CD4-positive, alpha-beta memory T cell (primary cell): ENCODE measurements at regions of chr3 and their contacts with region 1.

Region 1: GRCh38 chr3:72996473-72997333 is at the start of gene PPP4R2:
- DNase-seq: peak; percentile 94 to 95 (median 95)
- H3K4me3 ChIP-seq: peak within 1 kb of the TSS; percentile 65 to 77
- H3K4me3 Mint-ChIP-seq: peak within 1 kb of the TSS; percentile 84 to 98 (median 94)
- H3K27ac ChIP-seq: peak within 1 kb of the TSS; percentile 92
- H3K27ac Mint-ChIP-seq: peak within 1 kb of the TSS; percentile 91 to 98 (median 93)
- H3K4me1 ChIP-seq: peaks cover 48% of the 10 kb centered on the region
- H3K4me1 Mint-ChIP-seq: peaks cover 29 to 47% (median 38%) of the 10 kb centered on the region in 4 donors
- H3K27me3 ChIP-seq: no peaks in the 10 kb centered on the region
- H3K27me3 Mint-ChIP-seq: no peaks in the 10 kb centered on the region
- total RNA-seq, gene PPP4R2: 71.8 to 77.0 TPM

Region 2: DNA sequence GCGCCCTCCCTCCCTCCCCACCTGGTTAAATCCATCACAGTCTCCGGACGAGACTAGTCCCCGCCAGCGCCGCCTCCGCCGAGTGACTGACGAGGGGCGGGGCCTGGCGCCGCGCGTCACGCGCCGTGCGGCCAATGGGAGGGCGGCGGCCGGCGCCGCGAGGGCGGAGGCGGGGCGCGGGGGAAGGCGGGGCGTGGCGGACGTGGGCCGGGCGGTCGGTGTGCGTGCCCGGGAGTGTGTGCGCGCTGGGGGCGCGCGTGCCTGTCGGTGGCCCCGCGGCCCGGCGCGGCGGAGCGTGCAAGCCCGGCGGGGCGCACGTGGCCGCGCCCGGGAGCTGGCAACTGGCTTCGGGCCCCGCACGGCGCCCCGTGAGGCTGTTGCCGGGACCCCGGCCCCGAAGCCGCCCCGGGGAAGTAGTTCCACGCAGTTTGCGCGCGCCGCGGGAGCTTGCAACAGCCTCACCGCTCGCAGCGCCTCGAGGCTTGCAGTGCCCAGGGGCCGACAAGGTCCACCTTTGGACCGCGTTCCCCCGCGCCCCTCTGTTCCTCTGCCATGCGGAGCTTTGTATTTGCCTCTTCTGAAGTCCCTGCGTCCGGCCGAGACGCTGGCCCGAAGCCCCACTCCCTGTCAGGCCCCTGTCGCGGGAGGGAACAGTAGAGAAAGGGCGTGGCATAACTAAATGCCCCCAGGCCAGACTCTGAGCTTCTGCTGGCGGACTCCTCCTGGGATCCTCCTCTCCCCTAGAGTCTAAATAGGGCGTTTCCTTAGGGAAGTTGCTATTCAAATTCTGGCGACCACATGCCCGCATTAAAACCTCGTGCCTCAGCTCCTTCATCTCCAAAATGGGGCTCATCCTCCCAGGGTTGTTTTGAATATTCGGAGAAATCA is 549.4 kb before region 1 on chr3:
- CTCF ChIA-PET with region 1: no interaction called
- POLR2A ChIA-PET with region 1: interaction called, 3 read pairs
- intact Hi-C with region 1: loop called (anchors 5 kb)
- DNase-seq: peak; percentile 88 to 97 (median 95)
- H3K4me3 ChIP-seq: peak overlapping the region in 1 of 2 donors; percentile 79
- H3K4me3 Mint-ChIP-seq: peak overlapping the region; percentile 66 to 85 (median 73)
- H3K27ac ChIP-seq: peak overlapping the region; percentile 64
- H3K27ac Mint-ChIP-seq: peak overlapping the region in 4 of 7 donors; percentile 26 to 83 (median 68)
- H3K4me1 ChIP-seq: peaks cover 49% of the 10 kb centered on the region
- H3K4me1 Mint-ChIP-seq: peaks cover 34 to 43% (median 39%) of the 10 kb centered on the region in 4 donors
- H3K27me3 ChIP-seq: no peaks in the 10 kb centered on the region
- H3K27me3 Mint-ChIP-seq: peaks cover 9 to 10% of the 10 kb centered on the region in 2 donors

Region 3: DNA sequence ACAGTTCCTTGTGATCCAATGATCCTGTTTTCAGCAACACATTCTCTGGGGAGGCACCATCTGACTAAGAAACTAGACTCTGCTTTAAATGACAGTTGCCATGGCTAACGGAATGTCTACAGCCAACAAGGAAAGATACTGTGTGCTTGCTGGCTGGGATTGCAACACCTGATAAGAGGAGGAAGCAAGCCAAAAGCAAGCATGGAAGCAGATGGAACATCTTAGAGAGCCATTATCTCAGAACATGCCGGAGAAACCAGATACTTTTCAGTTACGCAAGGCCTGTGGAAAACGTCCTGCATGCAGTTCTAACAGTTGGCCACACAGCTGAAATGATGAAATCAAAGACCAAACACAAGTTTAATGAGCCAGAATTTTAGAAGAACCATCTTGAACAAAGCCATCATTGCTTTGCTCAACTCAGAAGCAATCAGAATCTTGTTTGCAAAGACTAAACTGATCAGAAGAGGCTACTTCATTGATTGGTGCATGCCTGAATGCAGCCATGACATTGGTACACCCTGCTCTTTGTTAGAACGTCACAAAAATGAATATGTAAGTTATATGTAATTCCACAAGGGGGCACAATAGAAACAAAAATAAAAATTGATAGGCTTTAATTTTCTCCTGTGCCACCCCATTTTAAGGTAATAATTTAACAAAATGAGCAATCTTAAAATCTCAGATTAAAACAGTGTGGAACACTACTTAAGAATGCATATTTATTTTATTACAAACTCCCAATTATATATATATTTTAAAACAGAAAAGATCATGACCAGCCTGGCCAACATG is 58.0 kb before region 1 on chr3:
- CTCF ChIA-PET with region 1: interaction called, 4 read pairs
- POLR2A ChIA-PET with region 1: no interaction called
- intact Hi-C with region 1: loop called (anchors 1 kb)
- DNase-seq: peak; percentile 60 to 71 (median 63)
- H3K4me3 ChIP-seq: no peak overlapping the region
- H3K4me3 Mint-ChIP-seq: no peak overlapping the region
- H3K27ac ChIP-seq: no peak overlapping the region
- H3K27ac Mint-ChIP-seq: peak overlapping the region in 1 of 7 donors; percentile 35
- H3K4me1 ChIP-seq: no peaks in the 10 kb centered on the region
- H3K4me1 Mint-ChIP-seq: peaks cover 0 to 2% (median 0%) of the 10 kb centered on the region in 4 donors
- H3K27me3 ChIP-seq: no peaks in the 10 kb centered on the region
- H3K27me3 Mint-ChIP-seq: peaks cover 0 to 8% of the 10 kb centered on the region in 2 donors

Region 4: DNA sequence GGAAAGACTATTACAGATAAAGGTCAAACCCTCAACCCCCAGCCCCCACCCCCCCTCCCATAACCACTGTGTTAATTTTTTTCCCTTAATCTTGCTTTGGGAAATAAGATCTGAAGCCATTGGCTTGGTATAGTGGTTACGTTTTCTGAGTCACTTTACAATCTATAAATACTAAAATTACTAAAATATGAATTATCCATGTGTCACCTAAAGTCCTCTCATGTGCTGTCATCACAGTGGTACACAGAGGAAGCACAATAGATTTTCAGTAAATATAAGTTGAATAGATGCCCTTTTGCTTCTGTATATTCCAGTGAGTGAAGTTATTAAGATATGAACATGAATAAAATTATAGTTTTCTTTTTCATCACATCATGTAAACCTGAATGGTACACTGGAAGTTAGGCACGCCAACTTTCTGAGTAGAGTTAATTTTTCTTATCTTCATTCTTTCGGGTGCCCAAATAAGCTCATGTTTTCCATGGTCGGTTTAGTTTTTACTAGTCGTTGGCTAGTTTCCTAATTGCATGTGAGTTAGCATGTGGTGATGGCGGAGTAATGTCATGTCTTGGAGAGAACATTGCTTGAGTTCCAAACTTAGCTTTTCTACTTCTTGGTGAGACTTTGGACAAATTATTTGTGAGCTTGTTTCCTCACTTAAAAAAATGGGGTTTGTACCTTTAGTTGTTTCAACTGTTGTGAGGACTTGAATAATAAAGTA is 11.4 kb after region 1 on chr3:
- CTCF ChIA-PET with region 1: interaction called, 15 read pairs
- POLR2A ChIA-PET with region 1: interaction called, 10 read pairs
- intact Hi-C with region 1: no loop called
- DNase-seq: no peak
- H3K4me3 ChIP-seq: no peak overlapping the region
- H3K4me3 Mint-ChIP-seq: peak overlapping the region in 6 of 8 donors; percentile 25 to 66 (median 42)
- H3K27ac ChIP-seq: no peak overlapping the region
- H3K27ac Mint-ChIP-seq: peak overlapping the region in 5 of 7 donors; percentile 3 to 80 (median 6)
- H3K4me1 ChIP-seq: peaks cover 88% of the 10 kb centered on the region
- H3K4me1 Mint-ChIP-seq: peaks cover 55 to 94% (median 71%) of the 10 kb centered on the region in 4 donors
- H3K27me3 ChIP-seq: no peaks in the 10 kb centered on the region
- H3K27me3 Mint-ChIP-seq: no peaks in the 10 kb centered on the region

Region 5: DNA sequence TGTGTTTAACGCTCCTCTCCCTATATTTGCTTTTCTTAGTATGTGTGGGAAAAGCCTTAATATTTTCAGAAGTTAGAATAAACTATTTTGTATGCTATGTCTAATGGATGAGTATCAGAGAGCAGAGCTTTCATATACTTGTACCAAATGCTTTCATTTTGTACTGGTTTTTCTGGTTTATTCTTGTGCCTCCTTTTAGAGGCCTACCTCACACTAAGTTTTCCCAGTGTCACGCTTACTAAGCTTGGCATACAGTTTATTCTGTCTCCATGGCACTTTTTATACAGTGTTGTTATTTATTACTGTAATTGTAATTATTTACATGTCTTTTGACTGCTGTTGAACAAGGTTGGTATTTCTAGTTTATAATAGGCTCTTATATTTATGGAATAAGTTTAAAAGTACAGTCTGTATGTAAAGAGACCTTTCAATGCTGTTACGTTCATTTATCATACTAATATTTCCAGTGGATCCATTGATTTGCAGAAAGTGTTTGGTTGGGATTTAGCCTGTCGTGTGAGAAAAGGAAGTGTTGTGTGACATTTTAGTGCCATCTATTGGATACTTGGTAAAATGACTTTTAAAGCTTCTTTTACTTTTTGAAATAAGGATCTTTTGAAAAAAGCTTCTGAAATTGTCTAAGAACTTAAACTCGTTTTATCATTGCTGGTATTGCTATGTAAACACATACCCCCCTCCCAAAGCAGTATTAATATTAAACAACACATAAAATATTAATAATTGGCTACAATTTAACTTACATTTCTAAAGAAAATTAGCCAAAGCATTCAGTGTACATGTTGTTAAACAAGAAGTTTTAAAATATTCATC is 59.5 kb after region 1 on chr3:
- CTCF ChIA-PET with region 1: interaction called, 6 read pairs
- POLR2A ChIA-PET with region 1: no interaction called
- intact Hi-C with region 1: loop called (anchors 2 kb)
- DNase-seq: peak in 4 of 5 donors; percentile 28 to 47 (median 38)
- H3K4me3 ChIP-seq: no peak overlapping the region
- H3K4me3 Mint-ChIP-seq: no peak overlapping the region
- H3K27ac ChIP-seq: no peak overlapping the region
- H3K27ac Mint-ChIP-seq: peak overlapping the region in 6 of 7 donors; percentile 0 to 80 (median 33)
- H3K4me1 ChIP-seq: peaks cover 9% of the 10 kb centered on the region
- H3K4me1 Mint-ChIP-seq: peaks cover 18 to 21% (median 19%) of the 10 kb centered on the region in 4 donors
- H3K27me3 ChIP-seq: no peaks in the 10 kb centered on the region
- H3K27me3 Mint-ChIP-seq: no peaks in the 10 kb centered on the region

Region 6: GRCh38 chr3:73175698-73176097 is 179.0 kb after region 1 on chr3:
- CTCF ChIA-PET with region 1: no interaction called
- POLR2A ChIA-PET with region 1: no interaction called
- intact Hi-C with region 1: no loop called
- DNase-seq: no peak
- H3K4me3 ChIP-seq: no peak overlapping the region
- H3K4me3 Mint-ChIP-seq: no peak overlapping the region
- H3K27ac ChIP-seq: no peak overlapping the region
- H3K27ac Mint-ChIP-seq: no peak overlapping the region
- H3K4me1 ChIP-seq: no peaks in the 10 kb centered on the region
- H3K4me1 Mint-ChIP-seq: no peaks in the 10 kb centered on the region
- H3K27me3 ChIP-seq: no peaks in the 10 kb centered on the region
- H3K27me3 Mint-ChIP-seq: peaks cover 0 to 6% of the 10 kb centered on the region in 2 donors